GM12878 (cell line): ENCODE measurements at regions of chr1 and their contacts with region 1.

Region 1: GRCh38 chr1:39258146-39258924 is 53.8 kb downstream of the MACF1 start:
- DNase-seq: no peak
- ATAC-seq: peak; percentile 69
- H3K4me3 ChIP-seq: no peak overlapping the region
- H3K27ac ChIP-seq: no peak overlapping the region
- H3K4me1 ChIP-seq: peaks cover 27% of the 10 kb centered on the region
- H3K27me3 ChIP-seq: no peaks in the 10 kb centered on the region
- CTCF ChIP-seq: peak; percentile 81 to 90 (median 85)
- EP300 ChIP-seq: no peak
- POLR2A ChIP-seq: no peak
- RAD21 ChIP-seq: peak; percentile 90

Region 2: DNA sequence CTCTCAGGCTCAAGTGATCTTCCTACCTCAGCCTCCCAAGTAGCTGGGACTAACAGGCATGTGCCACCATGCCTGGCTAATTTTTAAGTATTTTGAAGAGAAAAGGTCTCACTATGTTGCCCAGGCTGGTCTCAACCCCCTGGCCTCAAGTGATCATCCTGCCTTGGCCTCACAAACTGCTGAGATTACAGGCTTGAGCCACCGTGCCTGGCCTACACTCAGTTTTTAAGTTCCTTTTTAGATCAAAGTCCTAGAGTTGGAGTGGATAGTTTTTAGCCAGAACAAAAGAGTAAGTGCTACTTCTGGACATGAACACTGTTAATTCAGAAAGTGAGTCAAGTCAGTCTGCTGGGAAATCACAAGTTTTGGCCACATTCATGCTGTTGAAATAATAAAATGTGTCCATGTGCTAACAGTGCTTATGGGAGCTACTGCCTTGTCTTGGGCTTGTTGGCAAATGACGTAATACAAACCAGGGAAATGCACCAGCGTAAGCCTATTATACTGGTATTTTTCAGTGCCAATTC is 147.9 kb before region 1 on chr1:
- CTCF ChIA-PET with region 1: interaction called, 19 read pairs
- POLR2A ChIA-PET with region 1: no interaction called
- RAD21 ChIA-PET with region 1: interaction called, 9 read pairs
- SMC1A ChIA-PET with region 1: interaction called, 8 read pairs
- in situ Hi-C with region 1: no loop called
- intact Hi-C with region 1: no loop called
- DNase-seq: no peak
- ATAC-seq: peak; percentile 1; the same call in 1 of the 3 replicates
- H3K4me3 ChIP-seq: 0 out of 2 replicates have a peak overlapping the region, but pooled peaks have one; percentile 9
- H3K27ac ChIP-seq: peak overlapping the region; percentile 31; the same call in 1 of the 2 replicates
- H3K4me1 ChIP-seq: peaks cover 24% of the 10 kb centered on the region; the same call in 1 of the 2 replicates
- H3K27me3 ChIP-seq: no peaks in the 10 kb centered on the region
- CTCF ChIP-seq: no peak
- EP300 ChIP-seq: no peak
- POLR2A ChIP-seq: no peak
- RAD21 ChIP-seq: no peak

Region 3: DNA sequence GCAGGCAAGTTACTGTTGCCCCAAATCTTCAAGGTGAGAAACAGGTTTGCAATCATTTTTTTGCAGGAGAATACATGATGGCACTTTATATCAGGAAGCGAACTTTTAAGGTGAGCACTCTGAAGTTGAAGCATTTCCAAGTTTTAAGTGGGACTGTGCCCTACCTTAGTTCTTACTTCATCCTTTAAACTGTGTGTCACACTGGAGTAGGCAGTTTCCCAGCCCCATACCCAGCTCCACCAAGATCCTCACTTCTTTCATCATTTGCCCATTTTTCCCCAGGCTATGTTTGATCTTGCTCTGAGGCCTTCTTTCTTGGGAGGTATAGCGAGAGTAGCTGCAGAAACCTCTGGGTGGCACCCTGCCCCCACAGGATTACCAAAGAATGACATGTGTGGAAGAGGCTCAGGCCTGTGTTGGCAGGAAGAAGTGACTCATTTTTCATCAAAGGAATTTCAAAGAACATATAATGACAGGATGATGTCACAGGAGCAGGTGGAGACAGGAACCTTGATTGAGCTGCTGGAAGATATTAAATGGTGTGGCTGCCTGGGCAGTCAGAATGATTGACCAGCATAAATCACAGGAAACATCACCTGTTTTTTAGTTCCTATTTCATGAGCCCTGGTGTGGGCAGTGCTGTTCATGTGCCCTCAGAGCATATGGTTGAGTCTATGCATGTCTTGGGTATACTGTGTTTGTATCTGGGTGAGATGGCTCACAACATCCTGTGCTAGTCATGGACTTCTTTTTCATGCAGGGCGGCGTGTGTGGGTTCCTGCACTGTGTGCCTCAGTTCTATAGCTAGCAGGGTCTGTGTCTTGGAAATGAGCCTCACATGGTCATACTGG is 74.6 kb before region 1 on chr1:
- CTCF ChIA-PET with region 1: interaction called, 918 read pairs
- POLR2A ChIA-PET with region 1: no interaction called
- RAD21 ChIA-PET with region 1: interaction called, 393 read pairs
- SMC1A ChIA-PET with region 1: interaction called, 655 read pairs
- in situ Hi-C with region 1: no loop called
- intact Hi-C with region 1: no loop called
- DNase-seq: no peak
- ATAC-seq: peak; percentile 87
- H3K4me3 ChIP-seq: no peak overlapping the region
- H3K27ac ChIP-seq: peak overlapping the region; percentile 1; the same call in 1 of the 2 replicates
- H3K4me1 ChIP-seq: peaks cover 15% of the 10 kb centered on the region
- H3K27me3 ChIP-seq: no peaks in the 10 kb centered on the region
- CTCF ChIP-seq: peak; percentile 55 to 59 (median 57)
- EP300 ChIP-seq: no peak
- POLR2A ChIP-seq: no peak
- RAD21 ChIP-seq: peak; percentile 45

Region 4: GRCh38 chr1:39214998-39215873 is 43.1 kb before region 1 on chr1:
- CTCF ChIA-PET with region 1: interaction called, 37 read pairs
- POLR2A ChIA-PET with region 1: interaction called, 5 read pairs
- RAD21 ChIA-PET with region 1: interaction called, 59 read pairs
- SMC1A ChIA-PET with region 1: interaction called, 52 read pairs
- in situ Hi-C with region 1: no loop called
- intact Hi-C with region 1: no loop called
- DNase-seq: peak; percentile 79
- ATAC-seq: peak; percentile 87
- H3K4me3 ChIP-seq: peak overlapping the region; percentile 85
- H3K27ac ChIP-seq: peak overlapping the region; percentile 87
- H3K4me1 ChIP-seq: peaks cover 19% of the 10 kb centered on the region
- H3K27me3 ChIP-seq: no peaks in the 10 kb centered on the region
- CTCF ChIP-seq: no peak
- EP300 ChIP-seq: no peak
- POLR2A ChIP-seq: peak; percentile 84
- RAD21 ChIP-seq: no peak

Region 5: GRCh38 chr1:39230261-39231190 is 27.8 kb before region 1 on chr1:
- CTCF ChIA-PET with region 1: interaction called, 5 read pairs
- POLR2A ChIA-PET with region 1: no interaction called
- RAD21 ChIA-PET with region 1: interaction called, 12 read pairs
- SMC1A ChIA-PET with region 1: interaction called, 9 read pairs
- in situ Hi-C with region 1: no loop called
- intact Hi-C with region 1: no loop called
- DNase-seq: peak; percentile 57
- ATAC-seq: peak; percentile 85
- H3K4me3 ChIP-seq: no peak overlapping the region
- H3K27ac ChIP-seq: no peak overlapping the region
- H3K4me1 ChIP-seq: peaks cover 10% of the 10 kb centered on the region
- H3K27me3 ChIP-seq: no peaks in the 10 kb centered on the region
- CTCF ChIP-seq: no peak
- EP300 ChIP-seq: no peak
- POLR2A ChIP-seq: no peak
- RAD21 ChIP-seq: no peak

Region 6: DNA sequence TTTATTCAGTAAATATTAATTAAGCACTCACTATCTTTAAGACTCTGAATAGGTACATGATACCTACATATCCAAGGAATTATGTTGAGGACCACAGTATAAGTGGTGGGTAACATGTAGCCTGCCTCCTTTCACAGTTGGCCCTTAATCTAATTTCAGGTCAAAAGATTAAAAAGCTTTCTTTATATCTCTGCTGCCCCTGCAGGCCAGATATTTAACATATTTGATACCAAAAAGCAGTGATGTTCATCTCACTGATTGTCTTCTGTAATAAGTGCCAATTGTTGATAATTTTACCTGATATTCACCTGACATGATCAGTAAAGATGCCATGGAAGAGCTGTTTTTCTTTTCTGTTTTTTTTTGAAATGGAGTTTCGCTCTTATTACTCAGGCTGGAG is 939.3 kb after region 1 on chr1:
- CTCF ChIA-PET with region 1: no interaction called
- POLR2A ChIA-PET with region 1: no interaction called
- RAD21 ChIA-PET with region 1: no interaction called
- SMC1A ChIA-PET with region 1: no interaction called
- in situ Hi-C with region 1: no loop called
- intact Hi-C with region 1: no loop called
- DNase-seq: no peak
- ATAC-seq: no peak
- H3K4me3 ChIP-seq: no peak overlapping the region
- H3K27ac ChIP-seq: no peak overlapping the region
- H3K4me1 ChIP-seq: no peaks in the 10 kb centered on the region
- H3K27me3 ChIP-seq: no peaks in the 10 kb centered on the region
- CTCF ChIP-seq: peak in 2 of 3 experiments; percentile 22 to 25; a peak in 3 of 6 replicates
- EP300 ChIP-seq: no peak
- POLR2A ChIP-seq: no peak
- RAD21 ChIP-seq: peak; percentile 27; the same call in 1 of the 2 replicates